Left colon (tissue), 2 donors: ENCODE measurements at regions of chr21 and their contacts with region 1.

Region 1: DNA sequence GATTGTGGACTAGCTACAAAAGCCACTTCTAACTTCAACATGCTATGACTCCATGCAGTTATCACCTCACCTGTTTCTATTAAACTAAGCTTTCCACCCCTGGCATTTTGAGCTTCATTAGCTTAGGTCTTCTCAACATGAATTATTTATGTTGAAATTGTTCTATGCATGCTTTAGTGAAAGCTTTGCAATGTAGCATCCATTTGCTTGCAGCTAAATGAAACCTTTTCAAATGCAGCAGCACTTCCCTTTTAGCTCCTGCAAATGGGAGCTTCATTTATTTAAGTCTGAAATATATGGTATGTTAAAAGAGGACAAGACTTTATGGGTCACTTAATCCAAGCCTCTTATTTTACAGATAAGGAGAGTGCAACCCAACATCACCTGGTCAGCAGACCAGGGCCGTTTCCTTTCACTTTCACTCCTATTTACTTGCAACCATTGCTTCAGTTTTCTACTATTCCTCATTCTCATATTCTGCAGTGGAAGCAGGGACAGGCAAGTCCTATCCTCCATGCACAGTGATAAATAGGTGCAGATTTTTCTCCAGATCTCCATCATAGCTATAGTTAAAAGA is 56.4 kb upstream of the SAMSN1 start:
- DNase-seq: no peak
- ATAC-seq: peak; percentile 72

Region 2: DNA sequence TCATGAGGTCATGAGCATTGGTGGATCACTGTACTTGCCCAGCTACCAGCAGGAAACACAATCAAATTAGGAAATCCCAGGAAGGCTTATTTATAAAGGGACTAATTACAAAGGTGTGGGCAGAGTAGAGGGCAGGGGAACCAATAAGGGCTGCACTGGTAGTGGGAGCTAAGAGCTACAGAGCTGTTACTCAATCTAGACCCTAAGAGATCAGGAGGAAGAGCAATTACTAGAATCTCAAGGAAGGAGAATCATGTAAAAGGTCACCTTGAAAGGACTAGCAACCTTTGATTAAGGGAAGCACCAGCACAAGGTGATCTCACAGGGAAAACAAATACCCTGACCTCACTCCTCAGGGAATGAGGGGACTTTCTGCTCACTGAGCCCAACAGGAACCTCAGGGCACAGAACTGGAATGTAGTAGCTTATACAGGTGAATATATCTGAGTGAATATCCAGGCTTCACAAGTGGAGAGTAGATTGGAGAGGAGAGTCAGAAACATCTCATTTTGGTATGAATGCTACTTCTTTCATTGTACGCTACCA is 123.2 kb before region 1 on chr21:
- intact Hi-C with region 1: loop called in 1 of 2 experiments (anchors 10 kb)
- DNase-seq: no peak
- ATAC-seq: peak; percentile 75

Region 3: DNA sequence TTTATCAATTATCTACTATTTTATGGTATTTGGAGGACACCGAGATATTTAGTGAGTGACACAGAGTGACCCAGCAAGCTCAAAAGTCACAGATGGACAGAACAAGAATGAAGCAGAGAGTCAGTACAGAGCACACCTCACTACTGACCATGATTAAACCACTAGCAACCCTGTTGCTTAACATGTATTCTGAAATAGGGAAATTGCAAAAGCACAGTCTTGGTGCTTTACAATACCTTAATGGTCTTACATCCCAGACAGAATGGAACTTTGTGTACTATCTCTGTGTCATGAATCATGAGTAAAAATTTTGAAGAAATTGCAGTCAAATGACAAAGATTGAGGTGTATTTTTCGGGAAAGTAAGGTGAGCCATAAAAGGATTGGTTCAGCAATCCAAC is 53.7 kb before region 1 on chr21:
- intact Hi-C with region 1: no loop called
- DNase-seq: no peak
- ATAC-seq: no peak

Region 4: GRCh38 chr21:15080508-15080907 is 478.0 kb after region 1 on chr21:
- intact Hi-C with region 1: no loop called
- DNase-seq: no peak
- ATAC-seq: no peak